ENCODE measurements at regions of chr20 and their contacts with region 1.

Region 1: DNA sequence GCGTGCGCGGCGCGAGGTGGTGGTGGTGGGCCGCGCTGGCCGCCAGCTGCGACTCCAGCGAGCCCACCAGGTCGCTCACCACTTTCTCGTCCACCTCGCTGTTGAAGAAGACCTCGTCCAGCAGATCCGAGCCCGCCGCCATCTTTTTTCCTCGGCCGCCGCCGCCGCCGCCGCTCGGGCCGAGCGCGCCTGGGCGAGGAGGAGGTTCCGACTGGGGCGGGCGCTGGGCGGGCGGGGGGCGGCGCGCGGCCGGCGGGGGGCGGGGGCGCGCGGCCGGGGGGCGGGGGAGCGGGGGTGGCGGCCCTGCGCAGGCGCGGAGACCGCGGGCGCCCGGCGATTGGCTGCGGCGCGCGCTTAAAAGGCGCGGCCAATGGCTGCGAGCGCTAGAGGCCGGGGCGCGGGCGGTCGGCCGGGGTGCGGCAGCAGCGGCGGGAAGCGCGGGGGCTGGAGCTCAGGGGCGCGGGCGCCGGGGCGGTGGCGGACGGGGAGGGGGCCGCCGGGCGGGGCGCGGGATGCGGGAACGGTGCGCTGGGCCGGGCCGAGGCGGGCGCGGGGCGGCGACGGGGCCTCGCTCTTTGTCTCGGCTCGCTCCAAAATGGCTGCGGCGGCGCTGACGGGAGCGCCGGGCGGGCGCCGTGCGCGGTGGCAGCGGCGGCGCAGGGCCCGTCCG is at the start of gene TAF4:
- DNase-seq: peak; percentile 63 to 71
- H3K4me3 ChIP-seq: peak within 1 kb of the TSS; percentile 25 to 49 (median 49)
- H3K27ac ChIP-seq: peak within 1 kb of the TSS; percentile 81 to 92 (median 87)
- H3K4me1 ChIP-seq: peaks cover 19 to 25% of the 10 kb centered on the region in 2 donors
- H3K27me3 ChIP-seq: no peaks in the 10 kb centered on the region
- CTCF ChIP-seq: no peak
- POLR2A ChIP-seq: peak; percentile 83 to 95
- total RNA-seq, gene TAF4: 13.9 to 22.0 (median 18.6) TPM

Region 2: GRCh38 chr20:62002882-62003480 is 62.8 kb before region 1 on chr20:
- intact Hi-C with region 1: no loop called
- DNase-seq: no peak
- H3K4me3 ChIP-seq: no peak overlapping the region
- H3K27ac ChIP-seq: no peak overlapping the region
- H3K4me1 ChIP-seq: no peaks in the 10 kb centered on the region
- H3K27me3 ChIP-seq: no peaks in the 10 kb centered on the region
- CTCF ChIP-seq: no peak
- POLR2A ChIP-seq: no peak

Region 3: GRCh38 chr20:62121776-62122631 is 56.2 kb after region 1 on chr20 and contains the start of gene LSM14B:
- intact Hi-C with region 1: loop called (anchors 5 kb)
- DNase-seq: peak; percentile 97
- H3K4me3 ChIP-seq: peak within 1 kb of the TSS; percentile 63 to 87 (median 67)
- H3K27ac ChIP-seq: peak within 1 kb of the TSS; percentile 90 to 97 (median 90)
- H3K4me1 ChIP-seq: peaks cover 27 to 37% of the 10 kb centered on the region in 2 donors
- H3K27me3 ChIP-seq: no peaks in the 10 kb centered on the region
- CTCF ChIP-seq: no peak
- POLR2A ChIP-seq: peak; percentile 47 to 82
- total RNA-seq, gene LSM14B: 25.3 to 27.9 (median 25.6) TPM

Region 4: GRCh38 chr20:62143118-62143973 is 77.5 kb after region 1 on chr20 and contains the starts of genes PSMA7 and SS18L1:
- intact Hi-C with region 1: loop called (anchors 5 kb)
- DNase-seq: peak; percentile 86 to 87
- H3K4me3 ChIP-seq: peak within 1 kb of the TSS; percentile 57 to 76 (median 67)
- H3K27ac ChIP-seq: peak within 1 kb of the TSS; percentile 70 to 93 (median 76)
- H3K4me1 ChIP-seq: peaks cover 21 to 33% of the 10 kb centered on the region in 2 donors
- H3K27me3 ChIP-seq: no peaks in the 10 kb centered on the region
- CTCF ChIP-seq: no peak
- POLR2A ChIP-seq: peak; percentile 54 to 92
- total RNA-seq, gene PSMA7: 213 to 288 (median 261) TPM
- total RNA-seq, gene SS18L1: 12.2 to 22.0 (median 15.2) TPM

Region 5: GRCh38 chr20:62407221-62407992 is 341.6 kb after region 1 on chr20 and contains the start of gene CABLES2:
- intact Hi-C with region 1: no loop called
- DNase-seq: peak; percentile 94 to 95
- H3K4me3 ChIP-seq: peak within 1 kb of the TSS; percentile 43 to 67 (median 49)
- H3K27ac ChIP-seq: peak within 1 kb of the TSS in 2 of 3 donors; percentile 7 to 32
- H3K4me1 ChIP-seq: peaks cover 36 to 47% of the 10 kb centered on the region in 2 donors
- H3K27me3 ChIP-seq: no peaks in the 10 kb centered on the region
- CTCF ChIP-seq: peak in 2 of 6 experiments; percentile 35 to 36
- POLR2A ChIP-seq: peak in 1 of 2 donors; percentile 68
- total RNA-seq, gene CABLES2: 5.8 to 8.5 (median 7.7) TPM

Measured in thyroid gland (tissue), 4 donors.